ENCODE measurements at regions of chr18 and their contacts with region 1.

Region 1: DNA sequence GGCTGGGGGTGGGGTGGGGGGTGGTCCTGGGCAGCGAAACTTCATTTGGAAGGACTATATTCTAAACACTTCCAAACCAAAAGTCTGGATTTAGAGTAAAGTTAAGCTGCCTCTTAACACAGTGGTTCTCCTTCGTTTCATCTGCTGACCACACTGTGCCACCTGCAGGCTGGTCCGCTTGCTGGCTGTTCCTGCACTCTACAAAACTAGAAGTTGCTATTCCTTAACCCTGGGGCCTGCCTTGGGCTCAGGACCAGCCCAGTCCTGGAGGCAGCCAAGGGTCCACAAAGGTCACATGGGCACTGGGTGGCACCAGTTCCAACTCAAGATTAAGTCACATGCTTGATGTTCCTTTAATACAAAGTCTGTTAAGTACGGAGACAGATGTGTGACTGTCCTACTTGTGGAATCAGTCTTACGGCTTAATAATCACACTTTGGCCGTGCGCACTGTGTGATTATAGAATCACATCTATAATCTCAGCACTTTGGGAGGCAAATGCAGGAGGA is 195.4 kb downstream of the FAM210A start:
- DNase-seq: peak; percentile 57 to 72
- ATAC-seq: peak; percentile 89 to 91
- H3K4me3 ChIP-seq: no peak overlapping the region
- H3K27ac ChIP-seq: peak overlapping the region in 1 of 4 donors; percentile 49
- H3K4me1 ChIP-seq: peaks cover 6 to 14% of the 10 kb centered on the region in 2 donors
- H3K27me3 ChIP-seq: no peaks in the 10 kb centered on the region
- CTCF ChIP-seq: peak; percentile 42 to 76 (median 60)
- POLR2A ChIP-seq: no peak

Region 2: DNA sequence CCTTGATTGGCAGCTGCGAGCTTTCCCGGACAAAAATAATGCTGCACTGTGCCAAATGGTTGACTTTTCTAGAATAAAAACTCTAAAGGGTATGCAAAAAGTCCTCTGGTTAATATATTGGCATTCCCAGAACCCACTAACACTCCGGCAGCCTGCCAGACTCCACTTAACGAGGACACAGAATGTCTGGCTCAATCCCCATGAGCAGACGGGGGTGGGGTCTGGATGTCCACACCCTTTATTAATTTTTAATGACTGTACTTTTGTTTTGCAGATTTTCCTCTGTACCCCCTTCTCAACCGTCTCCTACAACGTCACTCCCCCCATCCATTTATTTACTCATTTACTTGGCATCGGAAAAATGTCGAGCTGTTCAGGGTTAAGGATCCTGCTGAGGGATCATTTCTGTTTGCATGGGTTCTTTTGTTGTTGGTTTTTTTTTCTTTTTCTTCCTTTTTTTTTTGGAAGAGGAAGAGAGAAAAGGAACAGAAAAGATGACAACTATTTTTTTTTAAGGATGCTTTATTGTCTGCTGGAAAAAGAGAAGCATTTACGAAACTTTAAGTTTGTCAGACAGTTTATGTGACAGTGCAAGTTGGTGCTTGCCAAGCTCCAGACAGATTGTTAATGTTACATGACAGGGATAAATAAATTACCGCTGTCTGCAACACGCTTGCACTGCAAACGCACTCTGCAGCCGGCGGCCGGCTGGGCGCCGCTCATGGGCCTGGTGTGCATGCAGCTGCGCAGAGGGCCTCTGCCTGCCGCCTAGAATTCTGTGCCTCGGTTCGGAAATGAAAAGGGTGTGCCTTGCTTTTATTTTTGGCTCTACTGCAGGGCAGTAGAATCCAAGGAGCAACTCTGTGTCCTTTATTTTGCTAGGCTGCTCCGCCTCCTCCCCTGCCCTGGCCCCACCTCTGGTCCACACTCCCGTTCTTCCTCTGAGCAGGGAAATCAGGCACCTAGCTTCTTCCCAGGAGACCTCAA is 308.8 kb before region 1 on chr18:
- in situ Hi-C with region 1: loop called in 3 of 4 experiments (anchors 10 to 25 kb)
- intact Hi-C with region 1: no loop called
- DNase-seq: peak; percentile 30 to 58
- ATAC-seq: peak in 1 of 2 donors; percentile 42
- H3K4me3 ChIP-seq: peak overlapping the region; percentile 13 to 31 (median 25)
- H3K27ac ChIP-seq: peak overlapping the region; percentile 80 to 94 (median 82)
- H3K4me1 ChIP-seq: peaks cover 55 to 61% of the 10 kb centered on the region in 2 donors
- H3K27me3 ChIP-seq: no peaks in the 10 kb centered on the region
- CTCF ChIP-seq: no peak
- POLR2A ChIP-seq: peak in 1 of 2 donors; percentile 16

Region 3: GRCh38 chr18:13279181-13280069 is 251.5 kb before region 1 on chr18:
- in situ Hi-C with region 1: no loop called
- intact Hi-C with region 1: loop called (anchors 10 kb)
- DNase-seq: no peak
- ATAC-seq: no peak
- H3K4me3 ChIP-seq: no peak overlapping the region
- H3K27ac ChIP-seq: no peak overlapping the region
- H3K4me1 ChIP-seq: peaks cover 0 to 5% of the 10 kb centered on the region in 2 donors
- H3K27me3 ChIP-seq: no peaks in the 10 kb centered on the region
- CTCF ChIP-seq: no peak
- POLR2A ChIP-seq: no peak

Region 4: DNA sequence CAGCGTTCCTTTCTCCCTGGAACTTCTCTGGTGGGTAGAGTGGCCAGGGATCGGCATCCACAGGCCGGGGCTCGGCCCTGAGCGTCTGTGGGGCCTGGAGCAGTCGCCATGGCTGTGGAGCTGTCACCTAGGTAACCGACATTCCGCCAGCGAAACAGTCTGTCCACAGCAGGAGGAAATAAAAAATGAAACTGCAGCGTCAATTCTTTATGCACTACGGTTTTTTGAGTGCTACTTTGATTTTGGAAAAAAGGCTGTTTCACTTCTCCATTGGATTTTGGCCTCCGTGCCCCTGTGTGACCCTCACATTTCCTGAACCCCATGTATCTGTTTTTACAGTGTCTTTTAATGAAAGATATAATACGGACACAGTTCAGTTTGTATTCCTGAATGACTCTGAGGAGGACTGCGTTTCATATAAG is 149.0 kb before region 1 on chr18:
- in situ Hi-C with region 1: loop called in 1 of 4 experiments (anchors 10 kb)
- intact Hi-C with region 1: loop called (anchors 5 kb)
- DNase-seq: peak; percentile 26 to 43
- ATAC-seq: peak in 1 of 2 donors; percentile 34
- H3K4me3 ChIP-seq: peak overlapping the region in 3 of 4 donors; percentile 27 to 41 (median 31)
- H3K27ac ChIP-seq: peak overlapping the region; percentile 58 to 70 (median 68)
- H3K4me1 ChIP-seq: peaks cover 43 to 53% of the 10 kb centered on the region in 2 donors
- H3K27me3 ChIP-seq: no peaks in the 10 kb centered on the region
- CTCF ChIP-seq: no peak
- POLR2A ChIP-seq: no peak

Region 5: DNA sequence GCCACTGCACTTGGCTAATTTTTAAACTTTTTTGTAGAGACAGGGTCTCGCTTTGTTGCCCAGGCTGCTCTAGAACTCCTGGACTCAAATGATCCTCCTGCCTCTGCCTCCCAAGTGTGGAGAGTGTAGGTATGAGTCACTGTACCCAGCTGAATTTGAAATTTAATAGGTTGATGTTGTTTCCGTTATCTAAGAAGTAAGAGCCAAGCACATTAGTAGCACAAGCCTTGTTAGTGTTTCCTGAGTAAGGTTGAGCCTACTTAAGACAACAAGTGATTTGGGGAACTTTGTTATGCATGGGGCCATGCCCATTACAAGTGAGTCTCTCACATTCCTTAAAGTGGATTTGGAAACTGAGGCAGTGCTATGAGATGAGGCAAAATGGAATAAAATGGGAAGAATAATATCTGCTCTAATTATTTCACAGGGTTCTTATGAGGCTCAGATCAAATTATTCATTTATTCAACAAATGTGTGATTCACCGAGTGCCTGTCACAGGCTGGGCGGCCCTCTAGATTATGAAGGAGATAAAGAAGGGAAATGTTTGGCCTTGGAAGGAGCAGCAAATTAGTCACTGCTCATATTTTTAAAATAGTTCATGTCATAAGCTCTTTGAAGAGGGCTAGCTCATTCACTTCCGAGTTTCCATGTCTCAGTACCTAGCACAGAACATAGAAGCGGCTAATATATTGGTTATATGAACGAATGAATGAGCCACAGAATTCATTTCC is 95.2 kb before region 1 on chr18:
- in situ Hi-C with region 1: no loop called
- intact Hi-C with region 1: loop called (anchors 10 kb)
- DNase-seq: no peak
- ATAC-seq: peak; percentile 70 to 76
- H3K4me3 ChIP-seq: no peak overlapping the region
- H3K27ac ChIP-seq: peak overlapping the region; percentile 51 to 69 (median 67)
- H3K4me1 ChIP-seq: peaks cover 0 to 19% of the 10 kb centered on the region in 2 donors
- H3K27me3 ChIP-seq: no peaks in the 10 kb centered on the region
- CTCF ChIP-seq: no peak
- POLR2A ChIP-seq: no peak

Region 6: DNA sequence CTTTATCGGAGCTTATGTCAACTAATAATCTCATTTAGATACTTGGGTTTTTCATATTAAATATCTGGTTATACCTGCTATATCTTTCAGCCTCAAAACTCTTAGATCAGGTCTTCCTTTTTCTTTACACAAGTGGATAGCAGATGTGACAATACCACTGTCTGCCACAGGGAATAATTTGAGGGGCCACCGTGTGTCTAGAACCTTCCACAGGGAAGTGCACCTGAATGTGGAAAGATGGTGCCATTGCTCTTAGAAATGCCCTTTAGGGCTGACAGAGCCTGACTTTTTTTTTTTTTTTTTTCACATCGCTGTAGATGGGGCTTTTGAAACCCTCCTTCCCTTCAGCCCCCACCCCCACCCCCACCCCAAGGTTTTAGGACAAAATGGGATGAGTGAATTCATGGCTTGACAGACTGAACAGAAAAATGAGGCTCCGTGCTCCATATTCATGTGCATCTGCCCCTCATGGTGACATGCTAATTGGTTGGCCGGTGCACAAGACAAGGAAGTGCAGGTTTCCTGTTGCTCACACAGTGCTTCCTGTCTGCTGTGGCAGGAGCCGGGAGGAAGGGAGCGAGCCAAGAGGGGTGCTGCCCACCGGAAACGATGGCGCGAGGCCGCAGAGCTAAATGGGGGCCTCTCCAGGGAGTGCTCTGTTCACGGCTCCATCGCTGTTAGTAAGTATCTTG is 66.4 kb before region 1 on chr18:
- in situ Hi-C with region 1: no loop called
- intact Hi-C with region 1: loop called (anchors 5 kb)
- DNase-seq: peak; percentile 23 to 34
- ATAC-seq: peak; percentile 45 to 46
- H3K4me3 ChIP-seq: peak overlapping the region in 1 of 4 donors; percentile 9
- H3K27ac ChIP-seq: peak overlapping the region in 3 of 4 donors; percentile 12 to 59 (median 39)
- H3K4me1 ChIP-seq: peaks cover 5 to 14% of the 10 kb centered on the region in 2 donors
- H3K27me3 ChIP-seq: no peaks in the 10 kb centered on the region
- CTCF ChIP-seq: no peak
- POLR2A ChIP-seq: no peak